ENCODE measurements at regions of chr10 and their contacts with region 1.

Region 1: DNA sequence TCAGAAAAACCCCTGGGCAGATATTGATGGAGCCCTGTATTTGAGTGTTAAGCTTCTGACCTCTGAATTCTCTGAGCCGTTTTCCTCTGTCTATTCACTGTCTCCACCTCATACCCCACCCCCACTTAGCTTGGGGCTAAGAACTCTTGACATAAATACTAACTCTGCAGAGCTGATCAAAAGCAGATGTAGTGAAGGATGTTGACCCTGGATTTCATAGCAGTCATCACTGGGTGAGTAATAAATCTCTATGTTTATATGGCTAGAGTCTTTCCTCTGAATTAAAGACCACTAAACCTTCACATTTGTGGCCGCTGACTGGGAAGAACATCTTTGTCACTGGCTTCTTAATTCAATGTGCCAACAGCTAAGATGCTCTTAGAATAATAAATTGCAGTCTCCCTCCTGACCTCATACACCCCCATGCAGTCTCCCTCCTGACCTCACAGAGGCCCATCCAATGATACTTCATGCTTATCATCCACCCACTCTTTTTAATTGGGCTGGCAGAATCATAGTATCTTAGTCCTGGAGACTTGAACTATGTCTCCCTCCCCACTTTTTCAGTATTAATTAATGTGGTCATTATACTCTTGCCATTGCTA is 78.0 kb upstream of the MACROH2A2 start:
- DNase-seq: peak; percentile 91
- ATAC-seq: peak; percentile 84
- H3K4me3 ChIP-seq: no peak overlapping the region
- H3K27ac ChIP-seq: no peak overlapping the region
- H3K4me1 ChIP-seq: peaks cover 5% of the 10 kb centered on the region
- H3K27me3 ChIP-seq: peaks cover 10% of the 10 kb centered on the region; the same call in 1 of the 2 replicates
- CTCF ChIP-seq: no peak
- POLR2A ChIP-seq: no peak
- RAD21 ChIP-seq: no peak

Region 2: GRCh38 chr10:69549959-69550358 is 424.7 kb before region 1 on chr10:
- CTCF ChIA-PET with region 1: no interaction called
- POLR2A ChIA-PET with region 1: no interaction called
- dilution Hi-C with region 1: no loop called
- in situ Hi-C with region 1: no loop called
- intact Hi-C with region 1: no loop called
- DNase-seq: no peak
- ATAC-seq: no peak
- H3K4me3 ChIP-seq: no peak overlapping the region
- H3K27ac ChIP-seq: no peak overlapping the region
- H3K4me1 ChIP-seq: no peaks in the 10 kb centered on the region
- H3K27me3 ChIP-seq: peaks cover 9% of the 10 kb centered on the region
- CTCF ChIP-seq: no peak
- POLR2A ChIP-seq: no peak
- RAD21 ChIP-seq: no peak

Region 3: DNA sequence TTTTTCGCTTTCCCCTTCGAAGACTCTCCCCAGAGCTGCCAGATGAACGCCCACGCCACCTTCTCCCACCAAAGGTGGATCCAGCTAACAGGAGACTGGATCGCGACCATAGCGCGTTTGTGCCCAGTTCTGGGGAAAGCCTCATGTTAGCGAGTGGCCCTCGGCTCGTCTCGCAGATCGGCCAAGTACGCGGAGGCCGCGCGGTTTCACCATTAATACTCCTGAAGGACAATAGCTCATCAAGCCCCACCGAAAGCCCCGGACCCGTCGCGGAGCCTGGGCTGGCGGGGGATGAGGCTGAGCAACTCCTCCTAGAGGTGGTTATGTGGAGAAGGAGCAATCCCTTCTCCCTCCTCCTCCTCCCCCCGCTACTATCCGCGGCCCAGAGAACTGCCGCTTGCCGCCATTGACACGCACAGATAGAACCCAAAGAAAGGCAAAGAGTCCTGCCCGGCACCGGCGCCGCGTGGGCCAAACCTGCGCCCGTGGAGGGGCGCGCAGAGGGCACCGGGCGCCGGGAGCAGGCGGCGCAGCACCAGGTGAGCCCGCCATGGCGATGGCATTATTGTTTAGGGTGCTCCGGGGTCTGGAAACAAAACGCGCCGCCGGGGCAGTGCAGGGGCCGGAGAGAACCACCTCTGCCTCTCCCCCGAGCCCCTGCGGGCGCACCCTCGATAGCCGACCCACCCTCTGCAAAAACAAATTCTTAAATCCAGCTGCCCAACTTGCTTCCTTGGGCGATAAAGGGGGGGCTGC is 78.0 kb after region 1 on chr10 and contains the start of gene MACROH2A2:
- CTCF ChIA-PET with region 1: no interaction called
- POLR2A ChIA-PET with region 1: no interaction called
- dilution Hi-C with region 1: no loop called
- in situ Hi-C with region 1: no loop called
- intact Hi-C with region 1: loop called (anchors 5 kb)
- DNase-seq: peak; percentile 66
- ATAC-seq: peak; percentile 92
- H3K4me3 ChIP-seq: peak within 1 kb of the TSS; percentile 74
- H3K27ac ChIP-seq: peak within 1 kb of the TSS; percentile 70
- H3K4me1 ChIP-seq: no peaks in the 10 kb centered on the region
- H3K27me3 ChIP-seq: peaks cover 15% of the 10 kb centered on the region
- CTCF ChIP-seq: peak; percentile 44
- POLR2A ChIP-seq: no peak
- RAD21 ChIP-seq: 0 out of 2 replicates have a peak, but pooled peaks have one; percentile 17
- total RNA-seq, gene MACROH2A2: 16.7 and 17.4 TPM in 2 replicates

Region 4: GRCh38 chr10:70146489-70147258 is 172.0 kb after region 1 on chr10 and contains the start of gene TYSND1:
- CTCF ChIA-PET with region 1: no interaction called
- POLR2A ChIA-PET with region 1: no interaction called
- dilution Hi-C with region 1: no loop called
- in situ Hi-C with region 1: no loop called
- intact Hi-C with region 1: loop called (anchors 10 kb)
- DNase-seq: peak; percentile 98
- ATAC-seq: peak; percentile 92
- H3K4me3 ChIP-seq: peak within 1 kb of the TSS; percentile 49
- H3K27ac ChIP-seq: peak within 1 kb of the TSS; percentile 76
- H3K4me1 ChIP-seq: peaks cover 11% of the 10 kb centered on the region
- H3K27me3 ChIP-seq: no peaks in the 10 kb centered on the region
- CTCF ChIP-seq: peak; percentile 85
- POLR2A ChIP-seq: peak; percentile 94
- RAD21 ChIP-seq: peak; percentile 63
- total RNA-seq, gene TYSND1: 2.8 and 2.9 TPM in 2 replicates

Region 5: GRCh38 chr10:70320751-70321150 is 346.1 kb after region 1 on chr10:
- CTCF ChIA-PET with region 1: no interaction called
- POLR2A ChIA-PET with region 1: no interaction called
- dilution Hi-C with region 1: no loop called
- in situ Hi-C with region 1: no loop called
- intact Hi-C with region 1: no loop called
- DNase-seq: no peak
- ATAC-seq: no peak
- H3K4me3 ChIP-seq: no peak overlapping the region
- H3K27ac ChIP-seq: no peak overlapping the region
- H3K4me1 ChIP-seq: no peaks in the 10 kb centered on the region
- H3K27me3 ChIP-seq: no peaks in the 10 kb centered on the region
- CTCF ChIP-seq: no peak
- POLR2A ChIP-seq: no peak
- RAD21 ChIP-seq: no peak